Aorta (tissue), 5 donors: ENCODE measurements at regions of chr1 and their contacts with region 1.

Region 1: DNA sequence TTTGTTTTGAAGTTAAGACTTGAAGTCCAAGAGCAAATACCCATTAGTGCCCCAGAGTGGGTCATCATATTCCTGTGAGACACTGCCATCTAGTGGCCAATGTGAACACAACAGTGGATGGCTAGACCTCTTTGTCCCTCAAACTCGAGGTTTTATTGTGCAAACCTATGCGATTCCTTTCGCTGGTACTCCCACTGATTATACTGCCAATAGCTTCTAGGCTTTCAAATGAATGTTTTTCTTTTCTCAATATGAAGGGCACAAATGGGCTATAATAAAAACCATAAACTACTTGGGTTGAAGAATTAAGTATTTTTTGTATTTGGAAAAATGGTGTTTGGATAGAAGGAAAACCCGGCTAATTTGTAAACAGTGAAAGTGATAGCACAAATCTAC is 100.4 kb upstream of the ZNF281 start:
- DNase-seq: peak in 1 of 2 donors; percentile 68
- ATAC-seq: peak; percentile 91
- H3K4me3 ChIP-seq: no peak overlapping the region
- H3K27ac ChIP-seq: no peak overlapping the region
- H3K4me1 ChIP-seq: no peaks in the 10 kb centered on the region
- H3K27me3 ChIP-seq: no peaks in the 10 kb centered on the region

Region 2: DNA sequence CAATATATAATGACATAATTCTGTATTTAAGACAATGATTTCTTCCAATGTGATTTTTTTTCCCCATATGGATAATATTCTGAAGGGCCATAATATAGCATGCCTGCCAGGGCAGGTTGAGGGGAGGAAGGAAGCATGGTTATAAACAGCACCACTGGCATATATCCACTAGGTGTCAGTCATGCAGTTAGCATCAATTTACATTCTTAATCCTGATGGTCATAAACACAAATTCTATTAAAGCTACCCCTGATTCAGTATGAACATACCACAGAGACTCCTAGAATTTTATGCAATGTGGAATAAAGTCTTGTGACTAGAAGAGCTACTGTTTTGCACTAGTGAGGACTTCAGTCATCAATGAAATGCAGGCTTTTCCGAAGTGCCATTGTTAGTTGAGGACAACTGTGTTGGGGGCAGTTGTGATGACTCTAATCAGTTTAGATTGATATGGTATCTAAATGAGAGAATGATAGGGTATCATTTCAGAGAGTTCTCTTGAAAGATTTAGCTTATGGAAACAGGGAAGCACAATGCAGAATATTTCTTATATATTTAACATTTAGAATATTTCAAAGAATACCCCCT is 825.4 kb before region 1 on chr1:
- intact Hi-C with region 1: loop called in 1 of 2 experiments (anchors 10 kb)
- DNase-seq: no peak
- ATAC-seq: no peak
- H3K4me3 ChIP-seq: no peak overlapping the region
- H3K27ac ChIP-seq: no peak overlapping the region
- H3K4me1 ChIP-seq: no peaks in the 10 kb centered on the region
- H3K27me3 ChIP-seq: no peaks in the 10 kb centered on the region